PC-9 (cell line): ENCODE measurements at regions of chr6 and their contacts with region 1.

Region 1: DNA sequence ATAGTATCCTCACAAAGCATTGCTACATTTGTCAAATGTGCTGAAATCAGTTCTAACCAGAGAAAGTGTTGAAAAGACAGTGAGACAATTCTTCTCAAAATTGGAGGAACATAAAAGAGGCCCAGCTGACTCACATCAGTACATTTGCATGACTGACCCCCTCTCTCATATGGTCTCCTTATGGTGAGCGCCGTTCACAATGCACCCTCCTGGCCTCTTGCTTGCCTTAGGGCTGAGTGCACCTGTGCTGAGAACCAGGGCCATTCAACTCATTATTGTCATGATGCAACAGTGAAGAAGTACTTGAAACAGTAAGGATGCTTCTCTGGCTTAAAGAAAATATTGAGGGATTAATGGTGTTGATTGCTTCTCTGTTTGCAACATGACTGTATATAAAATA is 375.2 kb upstream of the AGPAT4 start:
- DNase-seq: no peak
- H3K4me3 ChIP-seq: no peak overlapping the region
- H3K27ac ChIP-seq: no peak overlapping the region
- H3K4me1 ChIP-seq: no peaks in the 10 kb centered on the region
- H3K27me3 ChIP-seq: no peaks in the 10 kb centered on the region
- CTCF ChIP-seq: no peak

Region 2: GRCh38 chr6:161618831-161619454 is 30.1 kb before region 1 on chr6:
- CTCF ChIA-PET with region 1: interaction called, 10 read pairs
- POLR2A ChIA-PET with region 1: no interaction called
- intact Hi-C with region 1: no loop called
- DNase-seq: no peak
- H3K4me3 ChIP-seq: no peak overlapping the region
- H3K27ac ChIP-seq: no peak overlapping the region
- H3K4me1 ChIP-seq: no peaks in the 10 kb centered on the region
- H3K27me3 ChIP-seq: no peaks in the 10 kb centered on the region
- CTCF ChIP-seq: peak; percentile 34; the same call in 1 of the 2 replicates